HCT116 (cell line): ENCODE measurements at regions of chr7 and their contacts with region 1.

Region 1: DNA sequence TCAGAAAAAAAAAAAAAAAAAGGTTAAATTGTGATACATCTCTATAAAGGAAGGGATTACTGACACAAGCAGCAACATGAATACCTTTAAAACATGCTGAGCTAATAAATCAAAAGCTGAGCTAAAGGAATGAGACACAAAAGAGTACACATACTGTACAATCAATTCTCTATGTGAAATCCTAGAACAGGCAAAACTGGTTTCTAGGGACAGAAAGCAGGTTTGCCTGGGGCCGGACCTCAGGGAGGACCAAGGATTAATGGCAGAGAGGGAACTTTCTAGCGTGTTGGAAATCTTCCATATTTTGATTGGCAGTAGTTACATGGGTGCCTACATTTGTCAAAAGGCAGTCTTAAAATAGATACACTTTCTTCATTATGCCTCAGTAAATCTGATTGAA is 52.5 kb downstream of the KLRG2 start:
- DNase-seq: peak; percentile 32
- ATAC-seq: peak; percentile 23; the same call in 1 of the 2 replicates
- H3K4me3 ChIP-seq: no peak overlapping the region
- H3K27ac ChIP-seq: peak overlapping the region; percentile 53
- H3K4me1 ChIP-seq: peaks cover 13 to 30% of the 10 kb centered on the region in 2 experiments; a peak in 3 of 4 replicates
- H3K27me3 ChIP-seq: no peaks in the 10 kb centered on the region
- CTCF ChIP-seq: no peak
- POLR2A ChIP-seq: no peak
- RAD21 ChIP-seq: no peak

Region 2: GRCh38 chr7:139446036-139446881 is 15.2 kb after region 1 on chr7:
- CTCF ChIA-PET with region 1: interaction called, 14 read pairs
- POLR2A ChIA-PET with region 1: no interaction called
- RAD21 ChIA-PET with region 1: no interaction called
- intact Hi-C with region 1: no loop called
- DNase-seq: no peak
- ATAC-seq: no peak
- H3K4me3 ChIP-seq: no peak overlapping the region
- H3K27ac ChIP-seq: no peak overlapping the region
- H3K4me1 ChIP-seq: no peaks in the 10 kb centered on the region
- H3K27me3 ChIP-seq: no peaks in the 10 kb centered on the region
- CTCF ChIP-seq: no peak
- POLR2A ChIP-seq: no peak
- RAD21 ChIP-seq: no peak

Region 3: DNA sequence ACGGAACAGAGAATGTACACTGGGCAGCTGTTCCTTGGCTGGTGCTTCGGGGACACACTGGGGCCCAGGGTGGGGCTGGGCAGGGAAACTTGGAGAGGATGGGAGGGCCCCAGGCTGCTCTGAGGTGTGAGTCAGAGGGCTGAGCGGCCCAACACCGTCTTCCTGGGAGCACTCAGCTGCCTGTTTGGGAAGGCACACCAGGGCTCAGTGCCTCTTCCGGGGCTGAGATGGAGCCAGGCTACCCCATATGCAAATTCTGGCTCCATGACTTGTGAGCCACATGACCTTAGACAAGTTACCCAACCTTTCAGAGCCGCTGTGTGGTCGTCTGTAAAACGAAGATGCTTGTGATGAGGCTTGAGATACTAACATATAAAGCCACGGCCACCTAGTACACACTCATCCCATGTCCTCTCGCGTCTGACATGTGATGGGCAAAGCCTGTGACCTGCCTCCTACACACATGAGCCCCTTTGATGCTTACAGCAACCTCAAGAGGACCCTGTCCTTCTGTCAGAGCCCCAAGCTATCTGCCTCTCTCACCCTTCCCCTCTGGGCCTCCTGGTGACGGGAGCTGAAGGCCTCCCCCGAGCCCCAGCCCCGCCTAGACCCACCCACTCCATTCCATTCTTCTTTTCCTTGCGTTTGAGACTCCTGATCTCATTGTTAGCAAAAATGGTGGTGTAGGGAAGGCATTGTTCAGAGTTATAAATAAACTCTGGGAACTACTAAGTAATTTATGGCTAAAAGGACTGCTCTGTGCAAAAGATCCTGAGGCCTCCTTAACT is 26.3 kb after region 1 on chr7:
- CTCF ChIA-PET with region 1: interaction called, 11 read pairs
- POLR2A ChIA-PET with region 1: interaction called, 3 read pairs
- RAD21 ChIA-PET with region 1: no interaction called
- intact Hi-C with region 1: no loop called
- DNase-seq: no peak
- ATAC-seq: peak; percentile 87
- H3K4me3 ChIP-seq: 0 out of 4 replicates have a peak overlapping the region, but pooled peaks of 1 of the 2 experiments have one; percentile 3
- H3K27ac ChIP-seq: no peak overlapping the region
- H3K4me1 ChIP-seq: peaks cover 16 to 26% of the 10 kb centered on the region in 2 experiments
- H3K27me3 ChIP-seq: no peaks in the 10 kb centered on the region
- CTCF ChIP-seq: no peak
- POLR2A ChIP-seq: no peak
- RAD21 ChIP-seq: no peak

Region 4: GRCh38 chr7:139523199-139523941 is 92.4 kb after region 1 on chr7 and contains the start of gene CLEC2L:
- CTCF ChIA-PET with region 1: no interaction called
- POLR2A ChIA-PET with region 1: no interaction called
- RAD21 ChIA-PET with region 1: no interaction called
- intact Hi-C with region 1: no loop called
- DNase-seq: no peak
- ATAC-seq: no peak
- H3K4me3 ChIP-seq: no peak within 1 kb of the TSS
- H3K27ac ChIP-seq: no peak within 1 kb of the TSS
- H3K4me1 ChIP-seq: no peaks in the 10 kb centered on the region
- H3K27me3 ChIP-seq: no peaks in the 10 kb centered on the region
- CTCF ChIP-seq: no peak
- POLR2A ChIP-seq: no peak
- RAD21 ChIP-seq: no peak
- total RNA-seq, gene CLEC2L: not detected

Region 5: DNA sequence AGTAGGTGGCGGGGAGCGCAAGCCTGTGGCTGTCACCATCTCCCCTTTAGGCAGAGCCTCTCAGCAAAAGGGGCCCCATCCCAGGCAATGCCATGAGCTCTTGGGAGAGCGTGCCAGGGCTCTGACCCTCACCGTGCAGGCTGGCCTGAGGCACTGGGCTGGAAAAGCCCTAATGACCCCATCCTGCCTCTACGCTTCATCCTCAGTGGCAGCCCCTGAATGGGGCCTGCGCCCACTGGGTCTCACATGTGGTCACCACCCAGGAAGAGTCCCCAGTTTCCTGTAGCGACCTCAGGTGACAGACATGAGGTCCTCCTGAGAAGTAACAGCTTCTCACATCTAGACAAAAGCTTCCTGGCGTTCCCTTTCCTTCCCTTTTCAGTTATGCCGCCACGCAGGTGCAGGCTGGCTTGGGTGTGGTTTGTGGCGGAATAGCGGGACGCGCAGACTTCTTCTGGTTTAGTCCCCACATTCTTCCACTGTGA is 151.7 kb after region 1 on chr7:
- CTCF ChIA-PET with region 1: no interaction called
- POLR2A ChIA-PET with region 1: no interaction called
- RAD21 ChIA-PET with region 1: no interaction called
- intact Hi-C with region 1: no loop called
- DNase-seq: no peak
- ATAC-seq: no peak
- H3K4me3 ChIP-seq: no peak overlapping the region
- H3K27ac ChIP-seq: no peak overlapping the region
- H3K4me1 ChIP-seq: no peaks in the 10 kb centered on the region
- H3K27me3 ChIP-seq: no peaks in the 10 kb centered on the region
- CTCF ChIP-seq: no peak
- POLR2A ChIP-seq: no peak
- RAD21 ChIP-seq: no peak